Naive thymus-derived CD4-positive, alpha-beta T cell (primary cell): ENCODE measurements at regions of chr19 and their contacts with region 1.

Region 1: GRCh38 chr19:4414800-4415321 is 12.4 kb downstream of the CHAF1A start:
- DNase-seq: no peak
- ATAC-seq: no peak
- H3K4me3 ChIP-seq: no peak overlapping the region
- H3K4me3 Mint-ChIP-seq: no peak overlapping the region
- H3K27ac ChIP-seq: no peak overlapping the region
- H3K27ac Mint-ChIP-seq: peak overlapping the region in 2 of 9 donors; percentile 38 to 80
- H3K4me1 ChIP-seq: no peaks in the 10 kb centered on the region
- H3K4me1 Mint-ChIP-seq: peaks cover 0 to 4% (median 0%) of the 10 kb centered on the region in 7 donors
- H3K27me3 ChIP-seq: no peaks in the 10 kb centered on the region
- H3K27me3 Mint-ChIP-seq: no peaks in the 10 kb centered on the region

Region 2: GRCh38 chr19:4215807-4216370 is 199.0 kb before region 1 on chr19:
- CTCF ChIA-PET with region 1: interaction called, 14 read pairs
- POLR2A ChIA-PET with region 1: no interaction called
- intact Hi-C with region 1: no loop called
- DNase-seq: no peak
- ATAC-seq: no peak
- H3K4me3 ChIP-seq: no peak overlapping the region
- H3K4me3 Mint-ChIP-seq: no peak overlapping the region
- H3K27ac ChIP-seq: no peak overlapping the region
- H3K27ac Mint-ChIP-seq: no peak overlapping the region
- H3K4me1 ChIP-seq: peaks cover 0 to 9% of the 10 kb centered on the region in 2 donors
- H3K4me1 Mint-ChIP-seq: peaks cover 0 to 4% (median 0%) of the 10 kb centered on the region in 7 donors
- H3K27me3 ChIP-seq: no peaks in the 10 kb centered on the region
- H3K27me3 Mint-ChIP-seq: no peaks in the 10 kb centered on the region

Region 3: GRCh38 chr19:4524808-4525562 is 110.1 kb after region 1 on chr19:
- CTCF ChIA-PET with region 1: no interaction called
- POLR2A ChIA-PET with region 1: no interaction called
- intact Hi-C with region 1: no loop called
- DNase-seq: peak; percentile 19 to 70 (median 59)
- ATAC-seq: peak; percentile 77
- H3K4me3 ChIP-seq: no peak overlapping the region
- H3K4me3 Mint-ChIP-seq: no peak overlapping the region
- H3K27ac ChIP-seq: no peak overlapping the region
- H3K27ac Mint-ChIP-seq: no peak overlapping the region
- H3K4me1 ChIP-seq: no peaks in the 10 kb centered on the region
- H3K4me1 Mint-ChIP-seq: no peaks in the 10 kb centered on the region
- H3K27me3 ChIP-seq: no peaks in the 10 kb centered on the region
- H3K27me3 Mint-ChIP-seq: peaks cover 0 to 4% (median 0%) of the 10 kb centered on the region in 5 donors